Panc1 (cell line): ENCODE measurements at regions of chr1 and their contacts with region 1.

Region 1: DNA sequence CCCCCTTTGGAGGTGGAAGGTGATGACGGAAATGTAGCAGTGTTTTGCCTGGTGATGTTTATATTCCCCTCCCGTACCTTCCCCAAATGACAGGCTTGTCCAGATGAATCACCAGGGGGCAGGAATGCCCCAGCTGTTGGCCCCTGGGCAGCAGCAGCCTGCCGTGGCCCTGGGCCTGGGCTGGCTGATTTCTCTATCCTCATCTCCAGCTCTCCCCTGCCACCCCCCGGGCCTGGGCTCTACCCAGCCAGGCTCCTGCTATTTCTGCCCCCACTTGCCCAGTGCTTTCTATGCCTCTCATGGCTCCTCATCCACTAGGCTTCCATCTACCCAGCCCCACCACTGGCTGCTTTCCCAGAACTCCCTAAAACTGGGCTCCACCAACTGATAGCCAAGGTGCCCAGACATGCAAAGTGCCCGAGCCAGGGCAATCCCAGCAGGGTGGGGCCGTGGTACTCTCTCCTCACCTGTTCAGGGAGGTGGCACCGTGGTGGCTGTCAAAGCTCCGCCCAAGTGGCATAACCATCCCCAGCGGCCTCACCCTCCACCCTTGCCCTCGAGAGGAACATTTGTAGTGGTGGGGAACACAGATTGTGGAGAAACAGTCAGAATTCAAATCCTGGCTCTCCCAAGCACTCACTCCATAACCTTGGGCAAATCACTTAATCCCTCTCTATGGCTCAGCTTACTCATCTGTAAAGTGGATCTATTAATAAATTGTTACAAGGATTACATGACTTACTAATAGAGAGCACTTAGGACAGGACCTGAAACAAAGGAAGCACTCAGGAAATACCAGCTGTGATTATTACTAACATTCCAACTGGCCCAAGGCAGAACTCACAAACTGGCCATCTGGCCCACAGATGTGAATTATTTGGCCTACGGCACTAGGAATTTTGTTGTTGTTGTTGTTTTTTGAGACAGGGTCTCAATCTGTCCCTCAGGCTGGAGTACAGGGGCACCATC is 12.8 kb upstream of the ECE1 start:
- DNase-seq: no peak
- ATAC-seq: peak; percentile 75
- H3K4me3 ChIP-seq: no peak overlapping the region
- H3K27ac ChIP-seq: peak overlapping the region; percentile 76
- H3K4me1 ChIP-seq: peaks cover 49% of the 10 kb centered on the region
- H3K27me3 ChIP-seq: no peaks in the 10 kb centered on the region
- CTCF ChIP-seq: no peak

Region 2: GRCh38 chr1:21077085-21077484 is 225.9 kb before region 1 on chr1:
- CTCF ChIA-PET with region 1: no interaction called
- POLR2A ChIA-PET with region 1: no interaction called
- in situ Hi-C with region 1: no loop called
- intact Hi-C with region 1: no loop called
- DNase-seq: no peak
- ATAC-seq: no peak
- H3K4me3 ChIP-seq: no peak overlapping the region
- H3K27ac ChIP-seq: no peak overlapping the region
- H3K4me1 ChIP-seq: no peaks in the 10 kb centered on the region
- H3K27me3 ChIP-seq: no peaks in the 10 kb centered on the region
- CTCF ChIP-seq: no peak

Region 3: GRCh38 chr1:21324368-21325141 is 21.5 kb after region 1 on chr1:
- CTCF ChIA-PET with region 1: no interaction called
- POLR2A ChIA-PET with region 1: interaction called, 10 read pairs
- in situ Hi-C with region 1: no loop called
- intact Hi-C with region 1: no loop called
- DNase-seq: no peak
- ATAC-seq: peak; percentile 79
- H3K4me3 ChIP-seq: peak overlapping the region in 1 of 2 experiments; percentile 38; a peak in 2 of 4 replicates
- H3K27ac ChIP-seq: peak overlapping the region; percentile 97
- H3K4me1 ChIP-seq: peaks cover 91% of the 10 kb centered on the region
- H3K27me3 ChIP-seq: no peaks in the 10 kb centered on the region
- CTCF ChIP-seq: no peak

Region 4: GRCh38 chr1:21334214-21335087 is 31.4 kb after region 1 on chr1:
- CTCF ChIA-PET with region 1: no interaction called
- POLR2A ChIA-PET with region 1: interaction called, 10 read pairs
- in situ Hi-C with region 1: no loop called
- intact Hi-C with region 1: loop called (anchors 5 kb)
- DNase-seq: no peak
- ATAC-seq: peak; percentile 87
- H3K4me3 ChIP-seq: peak overlapping the region; percentile 29 to 50
- H3K27ac ChIP-seq: peak overlapping the region; percentile 96
- H3K4me1 ChIP-seq: peaks cover 80% of the 10 kb centered on the region
- H3K27me3 ChIP-seq: no peaks in the 10 kb centered on the region
- CTCF ChIP-seq: peak; percentile 95